Gastrocnemius medialis (tissue), 4 donors: ENCODE measurements at regions of chr11 and their contacts with region 1.

Region 1: DNA sequence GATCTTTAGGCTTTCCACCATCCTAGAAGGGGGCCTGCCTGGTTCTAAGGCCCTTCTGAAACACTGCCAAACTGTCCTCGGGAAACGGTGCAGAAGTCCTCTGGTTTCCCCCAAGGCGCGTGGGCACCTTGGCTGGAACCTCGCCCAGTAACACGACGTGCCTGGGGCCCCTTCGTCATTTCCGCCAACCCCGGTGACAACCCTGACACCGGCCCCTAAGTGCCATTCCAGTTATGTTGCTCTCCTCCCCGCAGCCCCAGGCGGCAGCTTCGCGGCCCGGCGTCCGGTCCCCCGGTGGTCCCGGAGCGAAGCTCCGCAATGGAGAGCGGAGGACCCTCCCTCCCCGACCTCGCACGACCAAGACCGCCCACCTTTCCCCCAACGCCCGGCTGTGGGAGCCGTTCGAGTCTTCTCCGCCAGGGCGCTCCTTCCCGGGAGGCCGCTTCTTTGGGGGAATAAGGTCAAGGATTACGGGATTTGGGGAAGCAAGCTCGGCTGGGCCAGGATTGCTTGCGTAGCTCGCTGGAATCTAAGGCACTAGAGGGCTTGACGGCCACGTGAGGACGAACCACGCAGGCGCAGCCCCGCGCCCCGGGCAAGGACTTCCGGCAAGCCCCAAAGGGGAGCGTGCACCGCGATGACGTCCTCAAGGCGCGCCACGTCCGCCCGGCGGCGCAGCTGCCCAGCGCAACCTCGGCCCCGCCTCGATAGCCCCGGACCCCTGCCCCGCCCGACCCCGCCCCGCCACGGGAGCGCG is 626 bp downstream of the RNH1 start:
- DNase-seq: peak; percentile 97
- ATAC-seq: peak; percentile 78 to 85
- H3K4me3 ChIP-seq: peak overlapping the region; percentile 80 to 94 (median 86)
- H3K27ac ChIP-seq: peak overlapping the region; percentile 96 to 100 (median 98)
- H3K4me1 ChIP-seq: peaks cover 23 to 39% of the 10 kb centered on the region in 2 donors
- H3K27me3 ChIP-seq: no peaks in the 10 kb centered on the region
- CTCF ChIP-seq: peak in 2 of 5 experiments; percentile 29 to 38
- POLR2A ChIP-seq: peak; percentile 83 to 84

Region 2: DNA sequence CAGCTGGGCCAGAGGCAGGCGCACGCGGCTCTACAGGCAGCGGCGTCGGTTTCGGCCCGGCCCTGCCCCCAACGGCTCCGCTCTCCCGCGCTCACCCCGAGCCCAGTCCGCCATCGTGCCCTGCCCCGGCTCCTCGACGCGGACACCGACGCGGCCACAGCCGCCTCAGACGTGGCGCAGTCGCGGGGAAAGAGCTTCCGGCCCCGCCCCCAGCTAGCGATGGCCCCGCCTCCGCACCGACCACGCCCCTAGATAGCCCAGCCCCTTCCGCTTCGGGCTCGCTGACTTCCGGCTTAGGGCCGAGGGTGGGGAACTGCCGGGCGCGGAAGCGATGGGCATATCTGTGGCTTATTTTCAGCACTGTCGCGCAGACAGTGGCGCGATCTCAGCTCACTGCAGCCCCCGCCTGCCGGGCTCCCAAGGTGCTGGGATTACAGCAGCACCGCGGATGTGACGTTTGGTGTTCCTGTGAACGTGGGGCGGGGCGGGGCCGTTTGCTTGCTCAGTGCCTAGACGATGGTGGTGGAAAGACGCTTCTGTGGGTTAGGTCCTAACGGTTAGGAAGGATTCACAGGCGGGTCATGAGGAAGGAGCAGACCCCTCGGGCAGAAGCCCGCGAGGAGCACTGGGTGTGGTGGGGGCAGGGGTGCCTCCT is 299.1 kb before region 1 on chr11 and contains the starts of genes BET1L and RIC8A:
- in situ Hi-C with region 1: no loop called
- intact Hi-C with region 1: loop called (anchors 5 kb)
- DNase-seq: peak; percentile 87 to 96
- ATAC-seq: peak; percentile 84 to 87
- H3K4me3 ChIP-seq: peak within 1 kb of the TSS; percentile 72 to 99 (median 84)
- H3K27ac ChIP-seq: peak within 1 kb of the TSS; percentile 95 to 100 (median 98)
- H3K4me1 ChIP-seq: peaks cover 26 to 41% of the 10 kb centered on the region in 2 donors
- H3K27me3 ChIP-seq: no peaks in the 10 kb centered on the region
- CTCF ChIP-seq: no peak
- POLR2A ChIP-seq: peak; percentile 94 to 96
- total RNA-seq, gene BET1L: 11.3 to 15.9 (median 12.8) TPM
- total RNA-seq, gene RIC8A: 35.6 to 68.5 (median 47.8) TPM

Region 3: GRCh38 chr11:313787-314547 is 192.4 kb before region 1 on chr11 and contains the start of gene IFITM1:
- in situ Hi-C with region 1: no loop called
- intact Hi-C with region 1: no loop called
- DNase-seq: no peak
- ATAC-seq: peak; percentile 59 to 64
- H3K4me3 ChIP-seq: peak within 1 kb of the TSS; percentile 46 to 61 (median 54)
- H3K27ac ChIP-seq: peak within 1 kb of the TSS; percentile 74 to 82 (median 78)
- H3K4me1 ChIP-seq: peaks cover 0 to 5% of the 10 kb centered on the region in 2 donors
- H3K27me3 ChIP-seq: peaks cover 8 to 23% (median 8%) of the 10 kb centered on the region in 3 donors
- CTCF ChIP-seq: no peak
- POLR2A ChIP-seq: peak; percentile 50 to 78
- total RNA-seq, gene IFITM1: 47.8 to 103 (median 80.5) TPM

Region 4: GRCh38 chr11:406978-407739 is 99.3 kb before region 1 on chr11:
- in situ Hi-C with region 1: no loop called
- intact Hi-C with region 1: loop called (anchors 5 kb)
- DNase-seq: peak; percentile 40 to 69
- ATAC-seq: peak; percentile 67 to 79
- H3K4me3 ChIP-seq: peak overlapping the region; percentile 57 to 85 (median 67)
- H3K27ac ChIP-seq: peak overlapping the region; percentile 47 to 76 (median 59)
- H3K4me1 ChIP-seq: peaks cover 0 to 10% of the 10 kb centered on the region in 2 donors
- H3K27me3 ChIP-seq: peaks cover 3 to 41% (median 4%) of the 10 kb centered on the region in 3 donors
- CTCF ChIP-seq: no peak
- POLR2A ChIP-seq: no peak

Region 5: GRCh38 chr11:429931-430456 is 76.4 kb before region 1 on chr11:
- in situ Hi-C with region 1: no loop called
- intact Hi-C with region 1: no loop called
- DNase-seq: no peak
- ATAC-seq: no peak
- H3K4me3 ChIP-seq: no peak overlapping the region
- H3K27ac ChIP-seq: no peak overlapping the region
- H3K4me1 ChIP-seq: no peaks in the 10 kb centered on the region
- H3K27me3 ChIP-seq: peaks cover 0 to 19% (median 15%) of the 10 kb centered on the region in 3 donors
- CTCF ChIP-seq: no peak
- POLR2A ChIP-seq: no peak

Region 6: GRCh38 chr11:518463-519250 is 12.2 kb after region 1 on chr11:
- in situ Hi-C with region 1: no loop called
- intact Hi-C with region 1: loop called (anchors 1 kb)
- DNase-seq: peak; percentile 91 to 98
- ATAC-seq: peak; percentile 96 to 97
- H3K4me3 ChIP-seq: peak overlapping the region; percentile 37 to 51 (median 44)
- H3K27ac ChIP-seq: peak overlapping the region; percentile 90 to 97 (median 94)
- H3K4me1 ChIP-seq: peaks cover 0 to 4% of the 10 kb centered on the region in 2 donors
- H3K27me3 ChIP-seq: no peaks in the 10 kb centered on the region
- CTCF ChIP-seq: peak; percentile 85 to 100 (median 100)
- POLR2A ChIP-seq: peak; percentile 30 to 60

Region 7: GRCh38 chr11:568306-569157 is 62.1 kb after region 1 on chr11:
- in situ Hi-C with region 1: no loop called
- intact Hi-C with region 1: loop called (anchors 5 kb)
- DNase-seq: peak; percentile 84 to 95
- ATAC-seq: peak; percentile 84 to 89
- H3K4me3 ChIP-seq: peak overlapping the region; percentile 62 to 83 (median 74)
- H3K27ac ChIP-seq: peak overlapping the region; percentile 85 to 97 (median 91)
- H3K4me1 ChIP-seq: peaks cover 8 to 24% of the 10 kb centered on the region in 2 donors
- H3K27me3 ChIP-seq: no peaks in the 10 kb centered on the region
- CTCF ChIP-seq: peak in 1 of 5 experiments; percentile 24
- POLR2A ChIP-seq: peak; percentile 79 to 83